ENCODE measurements at regions of chr1 and their contacts with region 1.

Region 1: DNA sequence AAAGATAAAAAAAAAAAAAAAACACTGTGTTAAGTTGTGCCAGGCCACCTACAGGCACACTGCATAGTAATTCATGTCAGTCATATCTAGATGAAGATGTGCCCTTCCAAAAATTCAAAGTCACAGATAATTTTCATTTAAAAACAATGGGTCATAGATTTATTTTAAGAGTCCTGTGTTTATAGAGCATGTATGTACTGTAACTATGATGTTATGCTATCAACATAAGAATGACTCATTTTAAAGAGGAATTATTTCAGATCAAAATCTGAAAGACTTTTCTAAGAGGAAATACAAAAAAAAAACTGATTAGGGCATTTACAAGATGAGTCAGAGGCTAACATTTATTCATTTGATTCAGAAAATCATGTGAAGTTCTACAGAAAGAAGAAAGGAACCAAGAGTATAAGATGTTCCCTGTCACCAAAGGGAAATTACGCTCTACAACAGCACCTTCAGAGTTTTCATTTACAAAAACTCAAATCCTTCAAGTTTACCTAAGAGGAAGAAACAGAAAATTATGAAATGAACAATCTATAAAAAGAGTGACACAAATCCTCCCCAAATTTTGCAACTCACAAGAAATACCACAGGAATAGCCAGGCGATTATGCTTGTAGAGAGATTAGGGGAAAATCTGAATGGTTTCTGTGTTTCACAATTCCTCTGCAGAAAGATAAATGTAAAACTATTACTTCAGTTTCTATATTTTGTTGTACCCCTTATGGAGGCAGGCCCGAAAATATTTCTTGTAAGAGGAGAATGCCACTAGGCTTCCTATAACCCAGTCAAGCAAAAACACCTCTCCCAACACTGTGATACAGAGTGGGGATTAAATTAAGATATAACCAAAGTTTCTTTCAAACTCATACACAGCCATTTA is 13.8 kb downstream of the TP53BP2 start:
- DNase-seq: no peak
- H3K4me3 Mint-ChIP-seq: peak overlapping the region; percentile 54
- H3K27ac Mint-ChIP-seq: peak overlapping the region; percentile 96
- H3K4me1 Mint-ChIP-seq: peaks cover 26% of the 10 kb centered on the region
- H3K27me3 Mint-ChIP-seq: no peaks in the 10 kb centered on the region

Region 2: DNA sequence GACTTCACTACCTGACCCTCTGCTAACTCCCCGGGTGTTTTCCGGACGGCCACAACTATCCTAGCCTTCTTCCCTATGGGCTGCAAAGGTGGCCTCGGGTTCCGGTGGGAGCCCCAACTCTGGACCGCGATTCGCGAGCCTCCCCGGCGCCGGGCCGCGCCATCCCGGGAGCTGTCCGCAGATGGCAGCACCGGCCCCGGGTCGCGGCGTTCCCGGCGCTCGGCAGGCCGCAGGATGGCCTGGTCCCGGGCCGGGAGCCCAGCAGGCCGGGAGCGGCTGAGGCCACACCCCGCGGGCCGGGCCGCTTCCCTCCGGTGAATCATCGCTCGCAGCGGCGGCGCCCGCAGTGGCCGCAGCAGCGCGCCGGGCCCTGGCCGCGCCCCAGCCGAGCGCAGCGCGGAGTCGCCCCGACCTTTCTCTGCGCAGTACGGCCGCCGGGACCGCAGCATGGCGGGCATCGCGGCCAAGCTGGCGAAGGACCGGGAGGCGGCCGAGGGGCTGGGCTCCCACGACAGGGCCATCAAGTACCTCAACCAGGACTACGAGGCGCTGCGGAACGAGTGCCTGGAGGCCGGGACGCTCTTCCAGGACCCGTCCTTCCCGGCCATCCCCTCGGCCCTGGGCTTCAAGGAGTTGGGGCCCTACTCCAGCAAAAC is 119.7 kb before region 1 on chr1 and contains the start of gene CAPN2:
- CTCF ChIA-PET with region 1: no interaction called
- POLR2A ChIA-PET with region 1: no interaction called
- intact Hi-C with region 1: loop called (anchors 5 kb)
- DNase-seq: peak; percentile 75
- H3K4me3 Mint-ChIP-seq: peak within 1 kb of the TSS; percentile 85
- H3K27ac Mint-ChIP-seq: peak within 1 kb of the TSS; percentile 80
- H3K4me1 Mint-ChIP-seq: peaks cover 58% of the 10 kb centered on the region
- H3K27me3 Mint-ChIP-seq: no peaks in the 10 kb centered on the region
- total RNA-seq, gene CAPN2: 61.2 to 64.5 TPM

Region 3: GRCh38 chr1:223811634-223812415 is 20.2 kb before region 1 on chr1:
- CTCF ChIA-PET with region 1: interaction called, 3 read pairs
- POLR2A ChIA-PET with region 1: interaction called, 3 read pairs
- intact Hi-C with region 1: loop called (anchors 2 kb)
- DNase-seq: no peak
- H3K4me3 Mint-ChIP-seq: no peak overlapping the region
- H3K27ac Mint-ChIP-seq: no peak overlapping the region
- H3K4me1 Mint-ChIP-seq: peaks cover 32% of the 10 kb centered on the region
- H3K27me3 Mint-ChIP-seq: no peaks in the 10 kb centered on the region

Region 4: GRCh38 chr1:224182866-224183590 is 351.0 kb after region 1 on chr1 and contains the start of gene DEGS1:
- CTCF ChIA-PET with region 1: no interaction called
- POLR2A ChIA-PET with region 1: no interaction called
- intact Hi-C with region 1: loop called (anchors 5 kb)
- DNase-seq: peak; percentile 86
- H3K4me3 Mint-ChIP-seq: peak within 1 kb of the TSS; percentile 81
- H3K27ac Mint-ChIP-seq: peak within 1 kb of the TSS; percentile 90
- H3K4me1 Mint-ChIP-seq: peaks cover 45% of the 10 kb centered on the region
- H3K27me3 Mint-ChIP-seq: no peaks in the 10 kb centered on the region
- total RNA-seq, gene DEGS1: 27.9 to 28.4 TPM

Region 5: DNA sequence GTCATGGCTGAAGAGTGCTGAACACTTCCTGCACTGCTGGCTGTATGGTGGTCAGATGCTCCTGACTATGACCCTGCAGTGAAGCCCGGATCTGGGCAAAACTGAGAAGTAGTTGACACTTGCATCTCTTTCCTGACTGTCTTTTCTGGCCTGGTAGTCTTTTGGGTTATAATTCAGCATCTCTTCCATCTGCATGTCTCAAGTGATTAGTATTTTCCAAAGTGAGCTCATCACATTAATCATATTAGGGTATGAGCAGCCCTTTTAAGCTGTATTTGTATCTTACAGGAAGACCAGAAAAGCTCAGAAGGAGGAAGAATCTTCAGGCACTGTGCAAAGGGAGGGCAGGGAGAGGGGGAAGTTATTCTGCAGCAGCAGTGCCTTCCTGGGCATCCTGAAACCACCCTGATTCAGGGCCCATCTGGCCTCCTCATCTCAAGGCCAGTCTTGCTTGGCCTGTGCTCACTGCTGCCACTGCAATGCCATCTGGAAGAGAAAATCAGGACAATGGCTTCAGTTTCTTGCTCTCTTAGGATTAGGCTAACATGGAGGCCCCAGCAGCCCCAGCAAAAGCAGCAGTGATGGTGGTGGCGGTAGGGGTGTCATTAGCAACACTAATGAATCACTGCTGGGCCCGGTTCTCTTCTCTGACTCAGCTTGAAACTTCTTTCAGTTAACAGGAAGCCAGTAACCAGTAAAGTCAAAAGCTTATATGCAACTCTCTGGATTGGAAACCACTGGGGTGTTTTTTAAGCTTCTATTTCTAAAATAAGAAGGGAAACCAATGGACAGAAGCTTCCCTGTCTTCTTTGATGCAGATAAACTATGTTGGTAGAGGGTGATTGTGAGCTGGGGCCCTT is 665.9 kb after region 1 on chr1:
- CTCF ChIA-PET with region 1: no interaction called
- POLR2A ChIA-PET with region 1: no interaction called
- intact Hi-C with region 1: loop called (anchors 2 kb)
- DNase-seq: peak; percentile 87
- H3K4me3 Mint-ChIP-seq: peak overlapping the region; percentile 66
- H3K27ac Mint-ChIP-seq: peak overlapping the region; percentile 87
- H3K4me1 Mint-ChIP-seq: peaks cover 33% of the 10 kb centered on the region
- H3K27me3 Mint-ChIP-seq: no peaks in the 10 kb centered on the region